Ovary (tissue), 10 donors: ENCODE measurements at regions of chr9 and their contacts with region 1.

Region 1: DNA sequence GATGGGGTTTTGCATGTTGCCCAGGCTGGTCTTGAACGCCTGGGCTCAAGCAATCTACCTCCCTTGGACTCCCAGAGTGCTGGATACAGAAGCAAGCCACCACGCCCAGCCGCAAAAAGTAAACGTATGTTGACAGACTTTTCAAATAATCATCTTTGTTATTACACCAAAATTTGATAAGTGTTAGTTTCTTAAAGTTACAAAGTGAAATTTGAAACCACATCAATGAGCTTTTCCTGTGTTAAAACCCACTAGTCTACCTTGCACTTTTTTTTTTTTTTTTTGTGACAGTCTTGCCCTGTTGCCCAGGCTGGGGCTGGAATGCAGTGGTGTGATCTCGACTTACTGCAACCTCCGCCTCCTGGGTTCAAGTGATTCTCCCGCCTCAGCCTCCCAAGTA is 29.9 kb downstream of the SPACA9 start:
- DNase-seq: no peak
- H3K4me3 ChIP-seq: no peak overlapping the region
- H3K27ac ChIP-seq: no peak overlapping the region
- H3K4me1 ChIP-seq: no peaks in the 10 kb centered on the region
- H3K27me3 ChIP-seq: no peaks in the 10 kb centered on the region
- CTCF ChIP-seq: no peak
- EP300 ChIP-seq: no peak
- POLR2A ChIP-seq: no peak

Region 2: GRCh38 chr9:132274861-132275260 is 633.8 kb before region 1 on chr9:
- intact Hi-C with region 1: no loop called
- DNase-seq: no peak
- H3K4me3 ChIP-seq: no peak overlapping the region
- H3K27ac ChIP-seq: no peak overlapping the region
- H3K4me1 ChIP-seq: no peaks in the 10 kb centered on the region
- H3K27me3 ChIP-seq: no peaks in the 10 kb centered on the region
- CTCF ChIP-seq: no peak
- EP300 ChIP-seq: no peak
- POLR2A ChIP-seq: no peak

Region 3: GRCh38 chr9:132498531-132499210 is 410.0 kb before region 1 on chr9:
- intact Hi-C with region 1: no loop called
- DNase-seq: no peak
- H3K4me3 ChIP-seq: no peak overlapping the region
- H3K27ac ChIP-seq: no peak overlapping the region
- H3K4me1 ChIP-seq: no peaks in the 10 kb centered on the region
- H3K27me3 ChIP-seq: no peaks in the 10 kb centered on the region
- CTCF ChIP-seq: no peak
- EP300 ChIP-seq: no peak
- POLR2A ChIP-seq: no peak

Region 4: DNA sequence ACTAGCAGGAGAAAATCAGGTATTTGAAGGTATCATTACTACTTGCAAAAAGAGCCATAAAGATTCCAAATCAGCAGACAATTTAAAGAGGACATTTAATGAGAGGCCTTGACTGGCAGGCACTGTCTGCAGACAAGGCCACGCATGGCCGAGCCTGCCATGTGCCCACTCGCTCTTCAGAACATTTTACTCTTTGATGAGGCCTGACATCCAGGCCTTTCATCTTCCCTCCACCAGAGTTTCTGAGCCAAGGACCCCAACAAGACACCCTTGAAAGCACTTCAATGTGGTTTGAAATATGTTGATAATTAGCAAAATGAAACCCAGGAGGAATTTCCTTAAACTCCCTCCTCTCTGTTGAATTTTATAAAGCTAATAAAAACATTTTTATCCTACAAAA is 47.0 kb before region 1 on chr9:
- intact Hi-C with region 1: loop called in 1 of 4 experiments (anchors 2 kb)
- DNase-seq: no peak
- H3K4me3 ChIP-seq: no peak overlapping the region
- H3K27ac ChIP-seq: no peak overlapping the region
- H3K4me1 ChIP-seq: no peaks in the 10 kb centered on the region
- H3K27me3 ChIP-seq: no peaks in the 10 kb centered on the region
- CTCF ChIP-seq: no peak
- EP300 ChIP-seq: no peak
- POLR2A ChIP-seq: no peak

Region 5: DNA sequence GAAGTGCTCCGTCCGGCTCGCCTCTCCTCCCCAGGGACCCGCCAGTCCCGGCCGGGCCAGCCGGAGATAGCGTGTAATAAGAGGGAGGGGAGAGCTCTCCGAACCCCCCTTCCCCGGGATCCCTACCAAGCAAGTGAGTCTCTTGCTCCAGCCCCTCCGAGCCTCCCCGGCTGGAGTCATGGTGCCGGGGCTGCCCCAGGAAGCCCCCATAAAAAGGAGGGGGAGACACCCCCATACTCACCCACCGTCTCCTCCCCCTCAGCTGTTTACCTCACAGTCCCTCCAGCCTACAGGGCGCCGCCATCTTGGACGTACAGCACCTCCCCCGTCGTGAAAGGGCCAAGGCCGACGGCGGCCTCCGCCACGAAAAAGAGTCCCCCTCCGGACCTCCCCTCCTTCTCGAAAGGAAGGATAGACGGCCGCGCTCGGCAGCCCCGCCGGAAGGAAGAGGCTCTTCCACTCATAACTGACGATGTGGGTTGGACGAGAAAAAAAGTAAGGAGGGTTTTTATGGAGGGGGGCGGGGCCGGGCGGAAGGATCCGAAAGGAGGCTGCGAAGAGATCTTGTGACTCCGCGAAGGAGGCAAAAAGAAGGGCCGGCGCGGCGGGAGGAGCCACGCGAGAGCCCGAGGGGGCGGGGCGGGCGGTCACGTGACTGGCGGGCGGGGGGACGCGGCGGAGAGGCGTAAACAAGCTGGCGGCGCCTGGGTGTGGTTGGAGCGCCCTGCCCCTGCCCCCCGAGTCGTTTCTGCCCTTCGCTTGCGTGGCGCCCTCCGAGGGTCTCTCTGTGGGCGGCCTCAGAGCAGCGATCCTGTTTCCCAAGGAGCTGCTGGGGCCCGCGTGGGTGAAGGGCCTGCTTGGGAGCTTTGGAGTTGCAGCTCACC is 35.9 kb after region 1 on chr9 and contains the start of gene TSC1:
- intact Hi-C with region 1: no loop called
- DNase-seq: peak; percentile 97 to 99 (median 99)
- H3K4me3 ChIP-seq: peak within 1 kb of the TSS; percentile 98
- H3K27ac ChIP-seq: peak within 1 kb of the TSS; percentile 99
- H3K4me1 ChIP-seq: peaks cover 3% of the 10 kb centered on the region
- H3K27me3 ChIP-seq: no peaks in the 10 kb centered on the region
- CTCF ChIP-seq: no peak
- EP300 ChIP-seq: peak; percentile 83
- POLR2A ChIP-seq: peak; percentile 58
- total RNA-seq, gene TSC1: 24.4 to 49.1 (median 42.0) TPM